Esophagus squamous epithelium (tissue), 5 donors: ENCODE measurements at regions of chr15 and their contacts with region 1.

Region 1: DNA sequence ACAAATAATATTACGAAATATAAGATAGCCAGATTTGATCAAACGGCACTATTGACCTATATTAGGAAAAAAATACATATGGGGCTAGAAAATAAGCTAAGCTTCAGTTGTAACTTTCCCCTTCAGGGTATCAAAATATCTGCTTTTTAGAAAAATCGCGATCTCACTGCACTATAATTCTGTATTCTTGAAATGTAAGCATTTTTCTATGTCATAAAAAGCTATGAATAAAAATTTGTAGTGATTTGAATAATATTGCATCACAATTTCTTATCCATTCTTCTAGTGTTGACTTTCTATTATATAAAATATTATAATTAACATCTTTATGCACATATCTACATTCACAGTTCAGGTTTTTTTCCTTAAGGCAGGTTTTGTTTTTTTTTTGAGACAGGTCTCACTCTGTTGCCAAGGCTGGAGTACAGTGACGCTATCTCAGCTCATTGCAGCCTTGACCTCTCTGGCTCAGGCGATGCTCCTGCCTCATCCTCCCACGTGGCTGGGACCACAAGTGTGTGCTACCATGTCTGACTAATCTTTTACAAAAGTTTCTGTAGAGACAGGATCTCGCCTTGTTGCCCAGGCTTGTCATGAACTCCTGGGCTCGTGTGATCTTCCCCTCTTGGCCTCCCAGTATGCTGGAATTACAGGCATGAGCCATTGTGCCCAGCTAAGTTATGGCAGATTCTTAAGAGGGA is 21.6 kb downstream of the EMC4 start:
- DNase-seq: no peak
- H3K4me3 ChIP-seq: no peak overlapping the region
- H3K27ac ChIP-seq: no peak overlapping the region
- H3K4me1 ChIP-seq: peaks cover 0 to 5% (median 0%) of the 10 kb centered on the region in 3 donors
- H3K27me3 ChIP-seq: no peaks in the 10 kb centered on the region
- CTCF ChIP-seq: no peak
- POLR2A ChIP-seq: no peak

Region 2: GRCh38 chr15:34304613-34305012 is 58.2 kb after region 1 on chr15:
- intact Hi-C with region 1: loop called (anchors 5 kb)
- DNase-seq: no peak
- H3K4me3 ChIP-seq: no peak overlapping the region
- H3K27ac ChIP-seq: no peak overlapping the region
- H3K4me1 ChIP-seq: peaks cover 0 to 21% (median 3%) of the 10 kb centered on the region in 3 donors
- H3K27me3 ChIP-seq: no peaks in the 10 kb centered on the region
- CTCF ChIP-seq: no peak
- POLR2A ChIP-seq: no peak

Region 3: GRCh38 chr15:34318277-34319079 is 72.1 kb after region 1 on chr15:
- intact Hi-C with region 1: no loop called
- DNase-seq: no peak
- H3K4me3 ChIP-seq: peak overlapping the region; percentile 36 to 70 (median 56)
- H3K27ac ChIP-seq: peak overlapping the region; percentile 75 to 89 (median 88)
- H3K4me1 ChIP-seq: peaks cover 3 to 61% (median 4%) of the 10 kb centered on the region in 3 donors
- H3K27me3 ChIP-seq: no peaks in the 10 kb centered on the region
- CTCF ChIP-seq: no peak
- POLR2A ChIP-seq: peak in 3 of 4 donors; percentile 54 to 56 (median 56)